ENCODE measurements at regions of chr4 and their contacts with region 1.

Region 1: DNA sequence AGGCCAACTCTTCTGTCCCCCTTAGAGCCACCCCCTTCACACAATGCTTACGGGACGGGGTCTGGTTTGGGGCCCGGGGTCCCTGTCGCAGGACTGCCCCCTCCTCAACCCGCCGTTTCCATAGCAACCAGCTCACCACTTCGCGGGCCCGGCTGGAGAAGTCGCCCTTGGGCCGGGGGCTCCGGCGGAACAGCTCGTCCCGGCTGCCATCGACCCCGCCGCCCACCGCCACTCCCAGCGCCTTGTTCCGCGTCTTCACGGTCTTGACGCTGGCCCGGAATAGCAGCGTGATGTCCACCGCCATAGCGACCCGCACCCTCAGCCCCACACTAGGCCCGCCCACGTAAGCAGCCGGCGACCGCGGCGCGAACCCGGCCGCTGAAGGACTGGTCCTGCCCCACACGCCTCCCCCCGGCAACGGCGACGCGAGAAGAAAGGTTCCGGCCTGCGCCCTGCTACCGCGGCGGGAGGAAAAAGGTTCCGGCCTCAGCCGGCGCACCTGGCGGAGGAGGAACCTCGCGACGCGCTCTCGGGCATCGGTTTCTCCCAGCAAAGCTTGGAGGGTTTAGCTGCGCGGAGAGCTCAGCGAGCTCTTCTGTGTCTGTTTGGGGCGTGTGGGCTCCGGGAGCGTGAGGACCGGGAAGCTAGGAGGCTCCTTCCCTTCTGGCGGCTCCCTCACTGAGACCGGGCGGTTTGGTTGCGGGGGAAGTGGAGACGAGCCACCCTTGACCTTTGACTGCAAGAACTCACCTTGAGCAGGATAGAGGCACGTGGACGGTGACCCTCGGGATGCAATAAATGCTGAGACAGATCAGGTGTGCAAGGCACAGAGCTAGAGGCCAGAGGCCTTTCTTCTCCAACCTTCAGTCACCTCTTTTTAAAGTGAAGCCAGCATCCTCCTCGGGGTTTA is at the start of gene STX18:
- DNase-seq: peak; percentile 86 to 94 (median 87)
- ATAC-seq: peak; percentile 91 to 99 (median 98)
- H3K4me3 ChIP-seq: peak within 1 kb of the TSS; percentile 84 to 99 (median 93)
- H3K27ac ChIP-seq: peak within 1 kb of the TSS in 11 of 12 donors; percentile 71 to 92 (median 80)
- H3K4me1 ChIP-seq: peaks cover 0 to 36% (median 25%) of the 10 kb centered on the region in 12 donors
- H3K27me3 ChIP-seq: no peaks in the 10 kb centered on the region
- CTCF ChIP-seq: no peak
- POLR2A ChIP-seq: peak in 1 of 2 donors; percentile 47
- total RNA-seq, gene STX18: 10.1 to 23.1 (median 16.6) TPM

Region 2: DNA sequence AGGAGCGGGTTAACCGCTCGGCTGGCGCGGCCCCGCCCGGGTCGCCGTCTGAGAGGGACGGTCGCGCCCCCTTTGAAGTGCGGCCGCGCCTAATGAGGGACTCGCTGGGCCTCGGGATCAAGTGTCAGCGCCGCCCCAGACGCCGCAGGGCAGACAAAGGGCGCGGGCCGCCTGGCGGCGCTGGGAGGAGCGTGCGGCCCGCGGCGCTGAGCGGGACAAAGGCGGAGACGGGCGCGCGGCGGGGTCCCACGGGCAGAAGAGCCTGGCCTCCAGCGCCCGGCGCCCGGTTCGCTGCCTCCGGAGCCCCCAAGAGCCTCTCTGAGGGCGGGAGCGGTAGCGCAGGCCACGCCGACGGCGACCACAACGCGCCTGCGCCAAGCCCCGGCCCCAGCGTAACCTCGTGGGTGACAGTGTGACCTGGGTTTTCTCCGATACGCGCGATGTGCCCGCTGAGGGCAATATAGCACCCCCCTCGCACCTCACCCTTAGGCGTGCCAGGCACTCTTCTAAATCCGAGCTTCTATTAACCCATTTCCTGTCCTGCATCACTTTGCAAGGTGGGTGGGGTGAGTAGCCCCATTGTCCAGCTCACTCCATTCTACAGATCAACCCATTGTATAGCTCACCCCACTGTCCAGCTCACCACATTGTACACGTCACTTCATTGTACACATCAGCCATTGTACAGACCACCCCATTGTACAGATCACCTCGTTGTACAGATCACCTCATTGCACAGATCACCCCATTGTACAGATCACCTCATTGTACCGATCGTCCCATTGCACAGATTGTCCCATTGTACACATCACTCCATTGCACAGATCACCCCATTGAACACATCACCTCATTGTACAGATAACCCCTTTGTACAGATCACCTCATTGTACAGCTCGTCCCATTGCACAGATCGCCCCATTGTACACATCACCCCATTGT is 33.6 kb after region 1 on chr4:
- intact Hi-C with region 1: loop called in 1 of 10 experiments (anchors 2 kb)
- DNase-seq: peak; percentile 48 to 80 (median 73)
- ATAC-seq: peak; percentile 44 to 93 (median 89)
- H3K4me3 ChIP-seq: peak overlapping the region; percentile 55 to 95 (median 64)
- H3K27ac ChIP-seq: peak overlapping the region; percentile 27 to 86 (median 70)
- H3K4me1 ChIP-seq: peaks cover 0 to 8% (median 0%) of the 10 kb centered on the region in 12 donors
- H3K27me3 ChIP-seq: no peaks in the 10 kb centered on the region
- CTCF ChIP-seq: peak in 11 of 12 donors; percentile 34 to 71 (median 50)
- POLR2A ChIP-seq: peak in 1 of 2 donors; percentile 10

Region 3: GRCh38 chr4:4859390-4859842 is 317.5 kb after region 1 on chr4 and contains the start of gene MSX1:
- intact Hi-C with region 1: loop called in 1 of 10 experiments (anchors 10 kb)
- DNase-seq: peak; percentile 89 to 92 (median 90)
- ATAC-seq: peak; percentile 92 to 98 (median 96)
- H3K4me3 ChIP-seq: peak within 1 kb of the TSS; percentile 58 to 95 (median 76)
- H3K27ac ChIP-seq: peak within 1 kb of the TSS; percentile 48 to 92 (median 84)
- H3K4me1 ChIP-seq: peaks cover 0 to 69% (median 32%) of the 10 kb centered on the region in 12 donors
- H3K27me3 ChIP-seq: peaks cover 72 to 98% (median 91%) of the 10 kb centered on the region in 9 donors
- CTCF ChIP-seq: no peak
- POLR2A ChIP-seq: peak; percentile 78 to 94
- total RNA-seq, gene MSX1: 2.7 to 7.4 (median 4.2) TPM